Breast epithelium (tissue), 4 donors: ENCODE measurements at regions of chr11 and their contacts with region 1.

Region 1: GRCh38 chr11:44621140-44621681 is 55.7 kb downstream of the CD82 start:
- DNase-seq: peak; percentile 21 to 67
- H3K4me3 ChIP-seq: peak overlapping the region in 1 of 3 donors; percentile 12
- H3K27ac ChIP-seq: no peak overlapping the region
- H3K4me1 ChIP-seq: no peaks in the 10 kb centered on the region
- H3K27me3 ChIP-seq: no peaks in the 10 kb centered on the region
- CTCF ChIP-seq: peak; percentile 69 to 92 (median 89)
- POLR2A ChIP-seq: no peak

Region 2: DNA sequence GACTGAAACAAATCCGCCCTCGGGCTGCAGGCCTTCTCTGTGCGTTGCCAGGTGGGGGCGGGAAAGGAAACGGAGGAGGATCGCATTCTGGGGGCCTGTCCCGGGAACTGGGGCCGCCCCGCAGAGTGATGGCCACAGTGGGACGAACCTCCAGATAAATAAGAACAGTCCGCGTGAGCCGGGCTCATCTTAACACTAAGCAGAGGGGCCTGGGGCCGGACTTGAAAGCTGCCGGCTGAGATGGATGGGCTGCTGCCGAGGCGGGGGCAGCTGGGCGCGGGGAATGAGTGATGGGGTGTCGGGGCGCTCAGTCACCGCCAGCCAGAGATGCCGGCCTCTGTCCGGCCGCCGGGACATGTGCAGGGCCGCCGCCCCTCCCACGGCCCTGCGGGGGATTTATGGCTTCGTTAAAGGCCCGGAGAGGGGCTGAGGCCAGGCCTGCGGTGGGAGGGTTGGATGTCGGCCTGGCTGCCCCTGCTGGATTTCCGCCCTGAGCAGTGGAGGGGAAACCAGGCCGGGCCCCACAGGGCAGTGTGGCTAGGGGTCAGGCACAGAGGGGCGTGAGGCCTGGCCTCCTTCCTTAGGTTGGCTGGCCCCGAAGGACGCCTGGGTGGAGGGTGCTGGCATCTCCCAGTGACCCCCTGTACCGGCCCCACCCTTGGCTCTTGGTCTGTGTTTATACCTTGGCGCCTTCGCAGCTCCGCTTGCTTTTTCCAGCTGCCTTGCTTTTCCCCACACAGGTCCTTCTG is 101.0 kb before region 1 on chr11:
- intact Hi-C with region 1: no loop called
- DNase-seq: peak; percentile 51 to 58
- H3K4me3 ChIP-seq: peak overlapping the region in 1 of 3 donors; percentile 54
- H3K27ac ChIP-seq: peak overlapping the region; percentile 36 to 91
- H3K4me1 ChIP-seq: no peaks in the 10 kb centered on the region
- H3K27me3 ChIP-seq: no peaks in the 10 kb centered on the region
- CTCF ChIP-seq: no peak
- POLR2A ChIP-seq: no peak

Region 3: DNA sequence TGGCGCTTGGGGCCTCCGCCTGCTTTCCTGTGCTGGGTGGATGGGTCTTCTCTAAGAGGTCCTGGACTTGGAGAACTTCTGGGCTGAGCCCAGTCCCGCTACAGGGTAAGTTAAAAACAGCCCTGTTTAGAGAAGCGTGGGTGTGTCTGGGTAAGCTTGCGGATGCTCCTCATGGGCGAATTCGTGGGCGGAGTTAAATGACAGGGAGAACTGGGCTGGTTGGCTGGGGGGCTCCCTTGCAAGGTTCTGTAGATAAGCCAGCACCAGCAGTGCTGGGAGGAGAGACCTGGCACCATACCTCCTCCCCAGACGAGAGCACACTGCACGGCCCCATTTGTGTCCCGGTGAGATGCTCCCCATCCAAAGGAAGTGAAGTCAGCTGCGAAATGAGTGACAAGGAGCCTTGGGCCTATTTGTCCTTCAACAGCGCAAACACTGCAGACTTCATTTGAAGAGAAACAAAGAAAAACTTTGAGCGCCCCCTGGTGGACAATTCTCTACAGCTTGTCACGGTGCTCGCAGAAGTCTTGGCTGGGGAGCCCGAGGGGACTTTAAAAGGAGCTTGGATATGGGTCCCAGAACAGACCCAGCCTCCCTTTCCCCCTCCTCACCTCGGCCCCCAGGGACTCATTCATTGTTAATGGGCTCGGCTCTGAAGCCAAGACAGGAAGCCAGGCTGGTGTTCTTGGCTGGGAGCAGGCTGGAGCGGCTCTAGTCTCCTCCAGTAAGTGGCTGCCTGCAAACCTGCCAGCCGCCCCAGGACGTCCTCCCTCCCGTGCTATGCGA is 290.0 kb after region 1 on chr11:
- intact Hi-C with region 1: loop called (anchors 10 kb)
- DNase-seq: peak; percentile 73 to 87
- H3K4me3 ChIP-seq: peak overlapping the region in 2 of 3 donors; percentile 9 to 37
- H3K27ac ChIP-seq: no peak overlapping the region
- H3K4me1 ChIP-seq: no peaks in the 10 kb centered on the region
- H3K27me3 ChIP-seq: no peaks in the 10 kb centered on the region
- CTCF ChIP-seq: peak; percentile 76 to 82 (median 78)
- POLR2A ChIP-seq: no peak